K562 (cell line): ENCODE measurements at regions of chr17 and their contacts with region 1.

Region 1: GRCh38 chr17:54992797-54993639 is 24.5 kb downstream of the STXBP4 start:
- DNase-seq: peak; percentile 35 to 69 (median 37)
- ATAC-seq: peak; percentile 74
- H3K4me3 ChIP-seq: no peak overlapping the region
- H3K27ac ChIP-seq: no peak overlapping the region
- H3K4me1 ChIP-seq: no peaks in the 10 kb centered on the region
- H3K27me3 ChIP-seq: no peaks in the 10 kb centered on the region
- CTCF ChIP-seq: peak; percentile 35 to 72 (median 35); a peak in 4 of 6 replicates
- EP300 ChIP-seq: no peak
- POLR2A ChIP-seq: no peak
- RAD21 ChIP-seq: peak; percentile 77 to 81

Region 2: GRCh38 chr17:55062921-55063320 is 69.9 kb after region 1 on chr17:
- CTCF ChIA-PET with region 1: no interaction called
- POLR2A ChIA-PET with region 1: no interaction called
- in situ Hi-C with region 1: no loop called
- intact Hi-C with region 1: no loop called
- DNase-seq: no peak
- ATAC-seq: no peak
- H3K4me3 ChIP-seq: no peak overlapping the region
- H3K27ac ChIP-seq: no peak overlapping the region
- H3K4me1 ChIP-seq: peaks cover 6 to 8% of the 10 kb centered on the region in 2 experiments; a peak in 3 of 5 replicates
- H3K27me3 ChIP-seq: no peaks in the 10 kb centered on the region
- CTCF ChIP-seq: no peak
- EP300 ChIP-seq: no peak
- POLR2A ChIP-seq: no peak
- RAD21 ChIP-seq: no peak

Region 3: GRCh38 chr17:55134486-55135157 is 141.6 kb after region 1 on chr17:
- CTCF ChIA-PET with region 1: no interaction called
- POLR2A ChIA-PET with region 1: no interaction called
- in situ Hi-C with region 1: no loop called
- intact Hi-C with region 1: no loop called
- DNase-seq: no peak
- ATAC-seq: no peak
- H3K4me3 ChIP-seq: no peak overlapping the region
- H3K27ac ChIP-seq: no peak overlapping the region
- H3K4me1 ChIP-seq: no peaks in the 10 kb centered on the region
- H3K27me3 ChIP-seq: no peaks in the 10 kb centered on the region
- CTCF ChIP-seq: no peak
- EP300 ChIP-seq: no peak
- POLR2A ChIP-seq: no peak
- RAD21 ChIP-seq: no peak

Region 4: DNA sequence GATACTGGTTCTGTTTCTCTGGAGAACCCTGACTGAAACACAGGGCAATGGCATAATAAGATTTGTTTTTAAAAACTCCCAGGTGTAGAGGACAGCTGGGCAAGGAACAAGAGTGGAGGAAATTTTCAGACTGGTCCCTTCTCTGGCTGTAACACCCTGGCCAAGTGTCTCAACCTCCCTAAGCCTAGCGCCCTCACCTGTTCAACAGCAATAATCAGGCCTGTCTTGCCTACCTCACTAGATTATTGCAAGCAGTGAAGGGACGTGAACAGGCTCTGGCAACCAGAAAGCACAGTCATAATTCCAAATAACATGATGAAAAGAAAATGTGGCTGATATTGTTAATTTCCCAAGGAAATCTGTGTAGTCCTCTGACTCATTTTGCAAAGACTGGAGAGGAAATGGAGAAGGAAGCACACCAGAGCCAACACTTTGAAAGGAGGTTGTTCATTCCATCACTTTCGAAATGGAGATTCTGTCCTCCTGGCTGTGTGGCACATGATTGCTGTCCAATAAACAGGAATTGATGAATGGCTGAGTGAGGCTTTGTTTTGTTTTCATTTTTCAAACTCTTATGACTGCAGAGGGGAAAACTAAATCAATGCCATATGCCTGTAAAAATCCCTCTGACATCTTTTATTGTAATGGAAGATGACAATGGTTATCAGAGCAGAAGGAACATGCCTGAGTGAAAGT is 184.3 kb after region 1 on chr17:
- CTCF ChIA-PET with region 1: no interaction called
- POLR2A ChIA-PET with region 1: no interaction called
- in situ Hi-C with region 1: no loop called
- intact Hi-C with region 1: loop called (anchors 10 kb)
- DNase-seq: peak in 1 of 4 experiments; percentile 28
- ATAC-seq: peak; percentile 77
- H3K4me3 ChIP-seq: no peak overlapping the region
- H3K27ac ChIP-seq: no peak overlapping the region
- H3K4me1 ChIP-seq: no peaks in the 10 kb centered on the region
- H3K27me3 ChIP-seq: no peaks in the 10 kb centered on the region
- CTCF ChIP-seq: peak; percentile 33 to 51 (median 41); a peak in 4 of 6 replicates
- EP300 ChIP-seq: no peak
- POLR2A ChIP-seq: no peak
- RAD21 ChIP-seq: peak in 1 of 2 experiments; percentile 46; a peak in 2 of 4 replicates

Region 5: GRCh38 chr17:55295411-55296170 is 302.6 kb after region 1 on chr17:
- CTCF ChIA-PET with region 1: interaction called, 4 read pairs
- POLR2A ChIA-PET with region 1: no interaction called
- in situ Hi-C with region 1: no loop called
- intact Hi-C with region 1: loop called (anchors 2 kb)
- DNase-seq: peak; percentile 71 to 82 (median 78)
- ATAC-seq: peak; percentile 96
- H3K4me3 ChIP-seq: no peak overlapping the region
- H3K27ac ChIP-seq: no peak overlapping the region
- H3K4me1 ChIP-seq: no peaks in the 10 kb centered on the region
- H3K27me3 ChIP-seq: peaks cover 0 to 4% of the 10 kb centered on the region in 2 experiments; a peak in 1 of 5 replicates
- CTCF ChIP-seq: peak; percentile 75 to 82 (median 80)
- EP300 ChIP-seq: no peak
- POLR2A ChIP-seq: no peak
- RAD21 ChIP-seq: peak; percentile 66 to 82

Region 6: GRCh38 chr17:55348749-55349354 is 355.8 kb after region 1 on chr17:
- CTCF ChIA-PET with region 1: interaction called, 4 read pairs
- POLR2A ChIA-PET with region 1: interaction called, 3 read pairs
- in situ Hi-C with region 1: no loop called
- intact Hi-C with region 1: loop called (anchors 2 kb)
- DNase-seq: peak; percentile 43 to 78 (median 55)
- ATAC-seq: peak; percentile 64
- H3K4me3 ChIP-seq: no peak overlapping the region
- H3K27ac ChIP-seq: no peak overlapping the region
- H3K4me1 ChIP-seq: peaks cover 10 to 25% of the 10 kb centered on the region in 2 experiments
- H3K27me3 ChIP-seq: no peaks in the 10 kb centered on the region
- CTCF ChIP-seq: peak; percentile 81 to 92 (median 83)
- EP300 ChIP-seq: no peak
- POLR2A ChIP-seq: no peak
- RAD21 ChIP-seq: peak; percentile 92 to 93

Region 7: DNA sequence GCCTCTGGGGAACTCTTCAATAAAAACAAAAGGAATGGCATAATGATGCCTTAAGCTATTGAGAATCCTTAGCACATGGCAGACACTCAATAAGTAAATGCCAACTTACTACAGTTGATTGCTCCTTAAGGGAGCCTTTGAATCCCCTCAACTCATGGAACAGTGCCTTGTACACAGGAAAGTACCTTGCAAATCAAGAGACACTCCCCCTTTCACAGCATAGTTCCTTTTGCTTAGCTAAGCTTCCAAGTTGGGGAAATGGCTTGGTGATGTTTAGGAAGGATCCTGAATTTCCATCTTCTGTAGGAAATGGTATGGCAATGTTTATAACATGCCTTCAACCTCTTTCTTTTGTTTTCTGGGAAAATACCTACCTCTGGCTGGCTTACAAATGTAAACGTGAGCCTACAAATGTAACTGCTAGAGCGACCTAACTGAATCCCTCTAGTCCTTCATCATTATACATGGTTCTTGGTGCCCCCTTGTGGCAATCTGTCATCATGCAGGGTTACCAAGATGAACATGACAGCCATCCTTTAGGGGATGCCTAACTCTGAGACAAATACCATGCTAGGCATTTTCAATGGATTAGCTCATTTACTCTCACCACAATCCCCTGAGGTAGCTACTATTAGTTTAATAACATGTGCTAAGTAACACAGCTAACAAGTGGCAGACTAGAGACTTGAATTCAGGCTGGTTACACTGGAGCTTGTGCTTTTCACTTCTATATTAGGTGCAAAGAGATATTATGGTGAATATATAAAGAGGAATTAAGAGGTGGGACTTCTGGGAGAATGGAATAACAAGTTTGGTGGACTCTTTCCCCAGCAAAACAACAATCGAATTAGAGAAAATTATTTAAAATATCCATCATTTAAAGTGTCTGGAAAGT is 363.7 kb after region 1 on chr17:
- CTCF ChIA-PET with region 1: interaction called, 6 read pairs
- POLR2A ChIA-PET with region 1: interaction called, 3 read pairs
- in situ Hi-C with region 1: loop called (anchors 5 kb)
- intact Hi-C with region 1: no loop called
- DNase-seq: peak; percentile 67 to 83 (median 74)
- ATAC-seq: peak; percentile 98
- H3K4me3 ChIP-seq: no peak overlapping the region
- H3K27ac ChIP-seq: no peak overlapping the region
- H3K4me1 ChIP-seq: no peaks in the 10 kb centered on the region; a peak in 2 of 5 replicates
- H3K27me3 ChIP-seq: no peaks in the 10 kb centered on the region
- CTCF ChIP-seq: peak; percentile 75 to 89 (median 81)
- EP300 ChIP-seq: no peak
- POLR2A ChIP-seq: no peak
- RAD21 ChIP-seq: peak; percentile 80 to 89

Region 8: GRCh38 chr17:55513885-55514591 is 521.0 kb after region 1 on chr17:
- CTCF ChIA-PET with region 1: no interaction called
- POLR2A ChIA-PET with region 1: no interaction called
- in situ Hi-C with region 1: loop called (anchors 10 kb)
- intact Hi-C with region 1: loop called (anchors 1 kb)
- DNase-seq: peak; percentile 48 to 81 (median 58)
- ATAC-seq: peak; percentile 83
- H3K4me3 ChIP-seq: no peak overlapping the region
- H3K27ac ChIP-seq: no peak overlapping the region
- H3K4me1 ChIP-seq: no peaks in the 10 kb centered on the region; a peak in 2 of 5 replicates
- H3K27me3 ChIP-seq: peaks cover under 1 to 3% of the 10 kb centered on the region in 2 experiments; a peak in 3 of 5 replicates
- CTCF ChIP-seq: peak; percentile 77 to 92 (median 77)
- EP300 ChIP-seq: no peak
- POLR2A ChIP-seq: no peak
- RAD21 ChIP-seq: peak; percentile 86 to 94